AG04449 (cell line): ENCODE measurements at regions of chr5 and their contacts with region 1.

Region 1: DNA sequence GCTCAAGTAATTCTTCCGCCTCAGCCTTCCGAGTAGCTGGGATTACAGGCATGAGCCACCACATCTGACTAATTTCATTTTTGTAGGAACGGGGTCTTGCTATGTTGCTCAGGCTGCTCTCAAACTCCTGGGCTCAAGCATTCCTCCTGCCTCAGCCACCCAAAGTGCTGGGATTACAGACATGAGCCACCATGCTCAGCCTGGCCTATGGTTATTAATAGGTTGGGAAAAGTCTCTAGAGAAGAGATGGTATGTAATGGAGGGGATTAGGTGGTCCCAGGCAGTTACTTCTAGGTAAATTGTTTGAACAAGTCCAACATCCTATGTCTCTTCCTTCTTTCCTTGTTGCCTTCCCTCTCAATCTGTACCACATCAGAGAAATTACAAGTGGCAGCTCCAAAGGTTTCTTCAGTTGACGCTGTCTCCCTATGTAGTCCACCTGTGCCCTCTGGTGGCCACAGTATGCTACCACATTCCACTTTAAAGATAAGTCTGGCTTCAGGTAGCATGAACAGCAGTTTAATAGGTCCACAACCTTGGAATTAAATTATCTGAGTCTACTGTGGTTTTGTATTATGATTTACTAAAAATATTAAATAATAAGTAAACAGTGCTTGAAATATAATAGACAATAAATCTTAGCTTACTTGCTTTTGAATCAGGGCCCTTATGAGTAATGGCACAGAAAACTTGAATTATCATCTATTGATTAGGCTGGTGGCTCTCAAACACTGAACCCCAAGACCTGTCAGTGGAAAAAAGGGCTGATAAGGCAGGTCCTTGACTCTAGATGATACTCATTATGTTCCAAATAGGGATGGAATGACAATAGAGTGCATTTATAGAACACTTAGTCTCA is 9.7 kb downstream of the TIGD6 start:
- DNase-seq: no peak
- H3K4me3 ChIP-seq: no peak overlapping the region
- CTCF ChIP-seq: peak; percentile 83

Region 2: DNA sequence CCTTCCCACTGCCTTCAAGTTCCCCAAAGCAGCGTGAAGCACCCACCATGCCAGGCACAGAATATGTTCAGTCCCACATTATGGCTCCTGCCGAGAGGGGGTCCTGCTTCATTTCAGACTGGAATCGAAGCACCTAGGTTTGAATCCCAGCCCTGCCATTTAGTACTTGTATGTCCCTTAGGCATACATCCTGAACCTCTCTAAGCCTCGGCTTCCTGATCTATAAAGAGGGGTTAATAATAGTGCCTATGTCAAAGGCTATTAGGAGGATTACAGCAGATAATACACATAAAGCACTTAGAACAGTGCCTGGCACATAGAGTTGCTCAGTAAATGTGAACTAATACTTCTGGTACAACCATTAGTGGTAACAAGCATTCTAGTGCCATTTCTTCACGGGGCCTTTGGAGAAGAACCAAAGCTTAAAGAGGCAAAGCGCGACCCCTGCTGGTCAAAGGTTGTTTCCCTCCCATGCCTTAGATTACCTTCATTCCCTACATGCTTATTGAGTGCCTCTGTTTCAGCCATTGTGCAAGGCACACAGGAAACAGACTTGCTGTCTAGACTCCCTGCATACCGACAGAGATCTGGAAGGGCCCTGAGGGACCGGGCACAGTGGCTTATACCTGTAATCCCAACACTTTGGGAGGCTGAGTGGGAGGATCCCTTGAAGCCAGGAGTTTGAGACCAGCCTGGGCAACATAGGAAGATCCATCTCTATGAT is 162.4 kb before region 1 on chr5:
- CTCF ChIA-PET with region 1: interaction called, 610 read pairs
- POLR2A ChIA-PET with region 1: no interaction called
- DNase-seq: peak; percentile 79
- H3K4me3 ChIP-seq: no peak overlapping the region
- CTCF ChIP-seq: peak; percentile 88

Region 3: GRCh38 chr5:149840226-149840825 is 150.4 kb before region 1 on chr5:
- CTCF ChIA-PET with region 1: interaction called, 610 read pairs
- POLR2A ChIA-PET with region 1: no interaction called
- DNase-seq: no peak
- H3K4me3 ChIP-seq: no peak overlapping the region
- CTCF ChIP-seq: no peak

Region 4: GRCh38 chr5:149852641-149853330 is 138.0 kb before region 1 on chr5:
- CTCF ChIA-PET with region 1: interaction called, 69 read pairs
- POLR2A ChIA-PET with region 1: no interaction called
- DNase-seq: peak; percentile 29
- H3K4me3 ChIP-seq: no peak overlapping the region
- CTCF ChIP-seq: peak; percentile 86

Region 5: GRCh38 chr5:149960272-149961185 is 30.2 kb before region 1 on chr5 and contains the start of gene SLC26A2:
- CTCF ChIA-PET with region 1: interaction called, 34 read pairs
- POLR2A ChIA-PET with region 1: no interaction called
- DNase-seq: peak; percentile 87
- H3K4me3 ChIP-seq: peak within 1 kb of the TSS; percentile 78
- CTCF ChIP-seq: no peak

Region 6: DNA sequence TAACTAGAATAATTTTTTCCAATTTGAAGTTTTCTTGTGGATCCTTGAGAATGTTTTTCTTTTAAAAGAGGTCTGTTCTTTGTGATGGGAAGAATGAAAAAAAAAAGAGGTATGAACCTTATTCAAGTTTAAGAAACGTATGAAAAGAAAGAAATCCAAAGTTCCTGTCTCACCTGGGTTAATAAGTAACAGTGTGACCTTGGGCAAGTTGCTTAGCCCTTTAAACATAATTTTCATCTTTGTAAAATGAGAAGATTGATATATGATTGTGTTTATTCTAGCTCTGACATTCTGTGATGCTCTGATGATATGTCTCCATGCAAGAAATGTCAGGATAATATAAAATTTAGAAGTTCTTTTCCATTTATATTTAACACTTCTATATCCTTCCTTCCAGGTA is 10.9 kb before region 1 on chr5:
- CTCF ChIA-PET with region 1: interaction called, 35 read pairs
- POLR2A ChIA-PET with region 1: no interaction called
- DNase-seq: no peak
- H3K4me3 ChIP-seq: no peak overlapping the region
- CTCF ChIP-seq: no peak

Region 7: GRCh38 chr5:150217873-150218692 is 227.3 kb after region 1 on chr5:
- CTCF ChIA-PET with region 1: interaction called, 18 read pairs
- POLR2A ChIA-PET with region 1: no interaction called
- DNase-seq: peak; percentile 37
- H3K4me3 ChIP-seq: no peak overlapping the region
- CTCF ChIP-seq: peak; percentile 89